CD8-positive, alpha-beta T cell (primary cell): ENCODE measurements at regions of chr7 and their contacts with region 1.

Region 1: GRCh38 chr7:39894904-39895303 is 55.2 kb upstream of the CDK13 start:
- DNase-seq: peak in 1 of 9 experiments; percentile 31
- ATAC-seq: no peak
- H3K4me3 ChIP-seq: no peak overlapping the region
- H3K4me3 Mint-ChIP-seq: no peak overlapping the region
- H3K27ac ChIP-seq: no peak overlapping the region
- H3K27ac Mint-ChIP-seq: no peak overlapping the region
- H3K4me1 ChIP-seq: no peaks in the 10 kb centered on the region
- H3K4me1 Mint-ChIP-seq: peaks cover 2% of the 10 kb centered on the region
- H3K27me3 ChIP-seq: no peaks in the 10 kb centered on the region
- H3K27me3 Mint-ChIP-seq: peaks cover 7% of the 10 kb centered on the region
- CTCF ChIP-seq: no peak

Region 2: GRCh38 chr7:39811161-39811614 is 83.7 kb before region 1 on chr7:
- CTCF ChIA-PET with region 1: no interaction called
- POLR2A ChIA-PET with region 1: no interaction called
- intact Hi-C with region 1: no loop called
- DNase-seq: no peak
- ATAC-seq: no peak
- H3K4me3 ChIP-seq: no peak overlapping the region
- H3K4me3 Mint-ChIP-seq: no peak overlapping the region
- H3K27ac ChIP-seq: no peak overlapping the region
- H3K27ac Mint-ChIP-seq: no peak overlapping the region
- H3K4me1 ChIP-seq: no peaks in the 10 kb centered on the region
- H3K4me1 Mint-ChIP-seq: no peaks in the 10 kb centered on the region
- H3K27me3 ChIP-seq: peaks cover 0 to 4% of the 10 kb centered on the region in 2 experiments
- H3K27me3 Mint-ChIP-seq: peaks cover 20% of the 10 kb centered on the region
- CTCF ChIP-seq: no peak

Region 3: GRCh38 chr7:39880556-39880955 is 14.3 kb before region 1 on chr7:
- CTCF ChIA-PET with region 1: interaction called, 39 read pairs
- POLR2A ChIA-PET with region 1: no interaction called
- intact Hi-C with region 1: no loop called
- DNase-seq: no peak
- ATAC-seq: no peak
- H3K4me3 ChIP-seq: no peak overlapping the region
- H3K4me3 Mint-ChIP-seq: no peak overlapping the region
- H3K27ac ChIP-seq: no peak overlapping the region
- H3K27ac Mint-ChIP-seq: no peak overlapping the region
- H3K4me1 ChIP-seq: no peaks in the 10 kb centered on the region
- H3K4me1 Mint-ChIP-seq: no peaks in the 10 kb centered on the region
- H3K27me3 ChIP-seq: no peaks in the 10 kb centered on the region
- H3K27me3 Mint-ChIP-seq: peaks cover 15% of the 10 kb centered on the region
- CTCF ChIP-seq: no peak

Region 4: GRCh38 chr7:39948956-39949928 is 54.3 kb after region 1 on chr7:
- CTCF ChIA-PET with region 1: interaction called, 7 read pairs
- POLR2A ChIA-PET with region 1: interaction called, 5 read pairs
- intact Hi-C with region 1: loop called (anchors 1 kb)
- DNase-seq: peak; percentile 95 to 100 (median 99)
- ATAC-seq: peak; percentile 74
- H3K4me3 ChIP-seq: peak overlapping the region; percentile 83 to 93
- H3K4me3 Mint-ChIP-seq: peak overlapping the region; percentile 97
- H3K27ac ChIP-seq: peak overlapping the region; percentile 88 to 95
- H3K27ac Mint-ChIP-seq: peak overlapping the region; percentile 99
- H3K4me1 ChIP-seq: peaks cover 27% of the 10 kb centered on the region
- H3K4me1 Mint-ChIP-seq: peaks cover 42% of the 10 kb centered on the region
- H3K27me3 ChIP-seq: no peaks in the 10 kb centered on the region
- H3K27me3 Mint-ChIP-seq: no peaks in the 10 kb centered on the region
- CTCF ChIP-seq: no peak

Region 5: GRCh38 chr7:40027545-40027944 is 132.6 kb after region 1 on chr7:
- CTCF ChIA-PET with region 1: interaction called, 11 read pairs
- POLR2A ChIA-PET with region 1: no interaction called
- intact Hi-C with region 1: no loop called
- DNase-seq: no peak
- ATAC-seq: no peak
- H3K4me3 ChIP-seq: no peak overlapping the region
- H3K4me3 Mint-ChIP-seq: no peak overlapping the region
- H3K27ac ChIP-seq: no peak overlapping the region
- H3K27ac Mint-ChIP-seq: peak overlapping the region; percentile 62
- H3K4me1 ChIP-seq: no peaks in the 10 kb centered on the region
- H3K4me1 Mint-ChIP-seq: peaks cover 25% of the 10 kb centered on the region
- H3K27me3 ChIP-seq: no peaks in the 10 kb centered on the region
- H3K27me3 Mint-ChIP-seq: no peaks in the 10 kb centered on the region
- CTCF ChIP-seq: no peak

Region 6: GRCh38 chr7:40047661-40048060 is 152.8 kb after region 1 on chr7:
- CTCF ChIA-PET with region 1: interaction called, 215 read pairs
- POLR2A ChIA-PET with region 1: interaction called, 4 read pairs
- intact Hi-C with region 1: loop called (anchors 1 kb)
- DNase-seq: peak in 1 of 9 experiments; percentile 8
- ATAC-seq: no peak
- H3K4me3 ChIP-seq: no peak overlapping the region
- H3K4me3 Mint-ChIP-seq: no peak overlapping the region
- H3K27ac ChIP-seq: no peak overlapping the region
- H3K27ac Mint-ChIP-seq: no peak overlapping the region
- H3K4me1 ChIP-seq: no peaks in the 10 kb centered on the region
- H3K4me1 Mint-ChIP-seq: peaks cover 6% of the 10 kb centered on the region
- H3K27me3 ChIP-seq: no peaks in the 10 kb centered on the region
- H3K27me3 Mint-ChIP-seq: no peaks in the 10 kb centered on the region
- CTCF ChIP-seq: no peak

Region 7: DNA sequence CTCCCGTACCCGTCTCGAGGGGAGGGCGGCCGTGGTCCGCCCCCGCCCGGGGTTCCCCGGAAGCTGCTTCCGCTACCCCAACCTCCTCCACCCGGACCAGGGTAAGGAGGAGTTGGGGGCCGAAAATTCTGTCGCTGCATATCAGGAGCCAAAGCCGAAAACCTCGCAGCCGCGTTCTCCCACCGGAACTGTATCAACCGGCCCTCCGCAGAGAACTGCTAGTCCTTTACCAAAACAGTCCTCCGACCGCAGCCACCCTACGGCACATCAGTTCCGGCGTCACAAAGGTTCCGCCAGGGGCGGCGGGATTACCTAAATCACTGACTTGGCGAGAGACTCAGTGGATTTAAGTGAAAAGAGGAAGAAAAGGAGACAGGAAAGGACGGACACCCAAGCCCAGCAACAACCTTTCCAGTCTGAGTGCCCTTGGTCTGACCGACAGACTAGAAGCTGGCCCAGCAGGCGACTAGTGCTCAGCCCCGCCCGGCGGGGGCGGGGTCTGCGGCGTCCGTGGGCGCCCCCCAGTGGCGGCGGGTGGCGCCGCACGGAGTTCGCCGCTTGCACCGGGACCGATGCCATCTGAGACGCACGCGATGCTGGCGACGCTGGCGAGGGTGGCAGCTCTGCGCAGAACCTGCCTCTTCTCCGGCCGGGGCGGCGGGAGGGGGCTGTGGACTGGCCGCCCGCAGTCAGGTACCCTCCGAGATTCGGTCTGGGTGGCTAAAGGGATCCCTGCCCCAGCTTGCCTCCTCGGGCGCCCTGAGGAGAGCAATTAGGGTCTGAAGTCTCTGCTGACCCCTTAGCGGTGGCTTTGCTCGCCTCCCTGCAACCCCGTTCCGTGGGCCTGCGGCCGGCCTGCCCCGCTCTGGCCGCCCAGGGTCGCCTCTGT is 239.8 kb after region 1 on chr7 and contains the starts of genes MPLKIP and SUGCT:
- CTCF ChIA-PET with region 1: interaction called, 4 read pairs
- POLR2A ChIA-PET with region 1: no interaction called
- intact Hi-C with region 1: loop called in 1 of 2 experiments (anchors 5 kb)
- DNase-seq: peak; percentile 72 to 93 (median 86)
- ATAC-seq: peak; percentile 89
- H3K4me3 ChIP-seq: peak within 1 kb of the TSS; percentile 86 to 98
- H3K4me3 Mint-ChIP-seq: peak within 1 kb of the TSS; percentile 99
- H3K27ac ChIP-seq: peak within 1 kb of the TSS; percentile 85 to 87
- H3K27ac Mint-ChIP-seq: peak within 1 kb of the TSS; percentile 98
- H3K4me1 ChIP-seq: peaks cover 33% of the 10 kb centered on the region
- H3K4me1 Mint-ChIP-seq: peaks cover 41% of the 10 kb centered on the region
- H3K27me3 ChIP-seq: no peaks in the 10 kb centered on the region
- H3K27me3 Mint-ChIP-seq: no peaks in the 10 kb centered on the region
- CTCF ChIP-seq: peak; percentile 90
- total RNA-seq, gene MPLKIP: 11.2 to 13.3 TPM
- total RNA-seq, gene SUGCT: 1.7 to 3.4 TPM

Region 8: GRCh38 chr7:40232242-40232893 is 337.5 kb after region 1 on chr7:
- CTCF ChIA-PET with region 1: no interaction called
- POLR2A ChIA-PET with region 1: no interaction called
- intact Hi-C with region 1: no loop called
- DNase-seq: peak in 2 of 9 experiments; percentile 20 to 42
- ATAC-seq: no peak
- H3K4me3 ChIP-seq: no peak overlapping the region
- H3K4me3 Mint-ChIP-seq: no peak overlapping the region
- H3K27ac ChIP-seq: no peak overlapping the region
- H3K27ac Mint-ChIP-seq: no peak overlapping the region
- H3K4me1 ChIP-seq: peaks cover 7% of the 10 kb centered on the region
- H3K4me1 Mint-ChIP-seq: peaks cover 6% of the 10 kb centered on the region
- H3K27me3 ChIP-seq: no peaks in the 10 kb centered on the region
- H3K27me3 Mint-ChIP-seq: no peaks in the 10 kb centered on the region
- CTCF ChIP-seq: peak; percentile 22